GM12878 (cell line): ENCODE measurements at regions of chr16 and their contacts with region 1.

Region 1: DNA sequence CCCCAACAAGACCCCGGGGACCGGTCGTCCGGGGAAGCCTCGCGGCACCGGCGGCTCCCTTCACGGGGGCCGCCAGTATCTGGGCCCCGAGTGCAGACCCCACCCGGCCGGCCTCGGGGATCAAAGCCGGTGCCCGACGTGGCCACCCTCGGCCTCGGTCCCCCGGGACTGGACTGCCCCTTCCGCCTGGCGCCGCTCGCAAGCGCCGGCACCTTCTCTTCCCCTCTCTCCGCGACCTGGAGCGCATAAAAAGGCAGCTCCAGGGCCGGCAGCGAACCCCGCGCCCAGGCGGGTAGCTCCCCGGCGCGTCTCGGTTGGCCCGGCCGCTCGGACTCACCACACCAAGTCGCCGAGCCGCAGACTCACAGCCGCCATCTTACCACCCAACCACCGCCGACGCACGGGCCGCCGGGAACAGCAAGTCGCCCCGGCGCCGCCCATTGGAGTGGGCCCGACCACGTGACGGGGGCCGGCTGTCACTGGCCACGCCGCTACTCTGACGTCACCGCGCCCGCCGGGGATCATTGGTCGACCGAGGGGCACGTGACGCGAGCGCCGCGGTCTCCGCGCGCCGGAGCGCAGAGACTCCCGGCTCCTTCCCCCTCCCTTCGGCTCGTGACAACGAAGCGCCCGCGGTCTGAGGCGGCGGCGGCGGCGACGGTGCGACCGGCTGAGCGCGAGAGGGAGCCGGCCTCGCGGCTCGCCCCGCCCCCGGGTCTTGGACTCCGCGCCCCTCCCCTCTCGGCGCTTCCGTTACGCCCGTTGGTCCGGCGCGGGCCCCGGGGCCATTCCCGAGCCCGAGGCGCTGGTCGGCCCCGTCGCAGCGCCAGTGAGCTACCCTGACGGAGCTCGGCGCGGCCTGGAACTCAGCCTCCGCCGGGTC is at the starts of genes GLYR1 and UBN1:
- DNase-seq: peak; percentile 83
- ATAC-seq: peak; percentile 91
- H3K4me3 ChIP-seq: peak within 1 kb of the TSS; percentile 91
- H3K27ac ChIP-seq: peak within 1 kb of the TSS; percentile 85
- H3K4me1 ChIP-seq: no peaks in the 10 kb centered on the region
- H3K27me3 ChIP-seq: no peaks in the 10 kb centered on the region
- CTCF ChIP-seq: no peak
- EP300 ChIP-seq: no peak
- POLR2A ChIP-seq: peak; percentile 96
- RAD21 ChIP-seq: no peak
- polyA plus RNA-seq, gene GLYR1: 7.3 to 10.1 TPM
- polyA plus RNA-seq, gene UBN1: 2.1 to 2.2 TPM

Region 2: GRCh38 chr16:5075637-5076036 is 228.5 kb after region 1 on chr16:
- CTCF ChIA-PET with region 1: no interaction called
- POLR2A ChIA-PET with region 1: no interaction called
- RAD21 ChIA-PET with region 1: no interaction called
- SMC1A ChIA-PET with region 1: no interaction called
- in situ Hi-C with region 1: loop called (anchors 10 kb)
- intact Hi-C with region 1: no loop called
- DNase-seq: no peak
- ATAC-seq: no peak
- H3K4me3 ChIP-seq: no peak overlapping the region
- H3K27ac ChIP-seq: no peak overlapping the region
- H3K4me1 ChIP-seq: peaks cover 10% of the 10 kb centered on the region
- H3K27me3 ChIP-seq: no peaks in the 10 kb centered on the region
- CTCF ChIP-seq: no peak
- EP300 ChIP-seq: no peak
- POLR2A ChIP-seq: no peak
- RAD21 ChIP-seq: no peak